MCF 10A (cell line): ENCODE measurements at regions of chr17 and their contacts with region 1.

Region 1: DNA sequence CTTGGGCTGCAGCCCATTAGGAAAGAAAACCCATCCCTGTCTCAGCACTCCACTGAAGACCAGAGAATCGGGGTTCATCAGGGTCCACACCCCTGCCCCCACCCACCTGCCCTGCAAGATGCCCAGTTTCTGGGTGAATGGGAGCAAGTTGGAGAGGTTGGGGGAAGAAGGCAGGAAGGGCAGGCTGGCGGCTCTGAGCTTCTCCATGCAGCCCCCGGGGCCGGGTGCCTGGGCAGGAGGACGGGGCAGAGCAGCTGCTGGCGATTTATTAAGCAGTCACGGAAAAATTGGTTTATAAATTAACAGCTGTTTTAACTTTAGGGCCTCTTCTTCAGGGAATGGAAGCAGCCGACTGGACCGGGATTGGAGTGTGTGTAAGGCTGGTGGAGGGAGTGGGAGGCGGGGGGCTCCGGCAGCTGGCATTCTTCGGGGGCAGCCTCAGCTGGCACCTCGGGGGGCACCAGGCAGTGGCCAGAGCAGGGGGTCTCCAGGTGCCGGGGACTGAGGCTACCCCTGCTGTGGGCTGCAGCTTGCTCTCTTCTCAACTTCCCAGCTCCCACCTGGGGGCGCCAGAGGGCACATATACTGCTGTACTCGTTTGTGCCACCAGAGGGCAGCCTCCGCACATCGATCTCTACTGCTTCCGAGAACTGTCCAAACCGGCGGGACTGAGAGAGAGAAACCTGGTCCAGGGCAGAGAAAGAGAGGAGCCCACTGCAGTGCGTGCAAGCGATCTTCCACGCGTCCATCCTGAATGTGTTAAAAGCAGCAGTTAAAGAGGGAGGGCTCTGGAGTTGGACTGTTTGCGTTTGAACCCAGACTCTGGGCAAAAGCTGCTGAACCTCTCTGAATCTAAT is 5.0 kb upstream of the PPP1R1B start:
- DNase-seq: peak; percentile 85
- H3K4me3 Mint-ChIP-seq: peak overlapping the region; percentile 9
- H3K27ac Mint-ChIP-seq: no peak overlapping the region
- H3K4me1 Mint-ChIP-seq: peaks cover 9% of the 10 kb centered on the region
- H3K27me3 Mint-ChIP-seq: peaks cover 14% of the 10 kb centered on the region
- CTCF ChIP-seq: peak; percentile 100

Region 2: GRCh38 chr17:39547713-39548478 is 73.9 kb before region 1 on chr17:
- CTCF ChIA-PET with region 1: interaction called, 125 read pairs
- POLR2A ChIA-PET with region 1: interaction called, 4 read pairs
- intact Hi-C with region 1: loop called (anchors 1 kb)
- DNase-seq: peak; percentile 60
- H3K4me3 Mint-ChIP-seq: no peak overlapping the region
- H3K27ac Mint-ChIP-seq: no peak overlapping the region
- H3K4me1 Mint-ChIP-seq: peaks cover 7% of the 10 kb centered on the region
- H3K27me3 Mint-ChIP-seq: no peaks in the 10 kb centered on the region
- CTCF ChIP-seq: peak; percentile 88

Region 3: DNA sequence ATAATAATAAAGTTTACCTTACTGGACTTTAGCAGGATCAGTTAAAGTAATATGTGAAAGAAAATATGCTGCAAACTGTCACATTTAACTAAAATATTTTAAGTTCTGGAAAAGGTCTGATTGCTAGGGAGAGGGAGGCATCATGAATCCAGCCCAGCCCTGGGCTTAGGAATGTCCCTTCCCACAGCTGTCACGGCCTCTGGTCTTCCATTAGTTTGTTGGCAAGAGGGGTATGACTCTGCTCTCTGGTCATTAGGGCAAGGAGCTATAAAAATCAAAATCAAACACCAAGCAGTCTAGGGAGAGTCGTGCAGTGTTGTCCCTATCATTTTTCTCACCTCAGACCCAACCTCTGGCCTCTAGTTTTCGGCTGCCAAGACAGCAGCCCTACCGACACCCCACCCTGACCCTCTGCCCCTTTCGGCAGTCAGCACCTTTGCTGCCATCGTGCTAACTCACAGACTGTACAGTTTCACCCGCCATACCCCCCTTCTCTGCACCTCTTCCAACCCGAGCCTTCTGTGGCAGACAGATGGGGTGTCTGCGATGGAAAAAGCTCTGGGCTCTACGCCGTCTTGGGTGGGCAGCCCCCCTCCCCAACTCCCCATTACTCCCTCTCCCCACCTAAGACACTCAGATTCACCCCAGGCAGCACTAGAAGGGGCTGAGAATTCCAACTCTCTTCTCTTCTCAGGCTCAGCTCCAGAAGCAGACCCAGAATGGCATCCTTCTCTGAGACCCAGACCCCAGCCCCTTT is 55.5 kb before region 1 on chr17:
- CTCF ChIA-PET with region 1: interaction called, 12 read pairs
- POLR2A ChIA-PET with region 1: interaction called, 3 read pairs
- intact Hi-C with region 1: no loop called
- DNase-seq: no peak
- H3K4me3 Mint-ChIP-seq: no peak overlapping the region
- H3K27ac Mint-ChIP-seq: no peak overlapping the region
- H3K4me1 Mint-ChIP-seq: no peaks in the 10 kb centered on the region
- H3K27me3 Mint-ChIP-seq: no peaks in the 10 kb centered on the region
- CTCF ChIP-seq: no peak

Region 4: DNA sequence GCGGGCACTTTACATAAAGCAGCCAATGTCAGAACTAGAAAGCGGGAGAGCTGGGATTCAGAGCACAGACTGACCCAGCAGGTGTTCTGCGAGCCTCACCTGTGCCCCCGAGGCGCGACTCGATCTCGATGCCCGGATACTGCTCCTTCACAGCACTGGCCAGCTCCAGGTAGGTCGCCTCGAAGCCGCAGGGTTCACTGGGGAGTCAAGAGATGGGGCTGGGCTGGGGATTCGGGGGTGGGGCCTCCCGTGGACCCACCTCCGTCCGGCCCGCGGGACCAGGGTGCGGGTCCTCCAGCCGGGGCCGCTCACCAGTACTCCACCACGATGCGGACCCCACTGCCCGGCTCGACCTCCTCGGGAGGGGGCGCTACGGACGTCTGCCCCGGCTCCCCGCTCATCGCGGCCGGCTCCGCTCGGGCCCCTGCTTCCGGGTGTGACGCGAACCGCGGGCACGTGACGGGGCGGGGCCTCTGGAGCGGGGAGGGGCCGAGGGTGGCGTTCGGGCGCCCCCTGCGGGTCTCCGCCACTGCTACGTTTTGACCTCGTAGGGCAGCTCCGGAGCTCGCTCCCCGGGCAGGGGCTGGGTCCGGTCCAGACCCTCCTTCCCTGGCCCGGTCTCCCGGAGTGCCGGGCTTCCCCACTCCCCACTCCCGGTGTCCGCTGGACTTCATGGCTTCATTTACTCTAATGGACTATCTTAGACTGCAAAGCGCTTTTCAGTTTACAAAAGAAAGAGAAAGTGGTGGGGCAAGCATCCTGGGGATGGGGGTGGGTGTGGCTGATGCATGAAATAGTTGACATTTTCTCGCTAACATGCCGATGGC is 108.6 kb after region 1 on chr17 and contains the start of gene MIEN1:
- CTCF ChIA-PET with region 1: interaction called, 10 read pairs
- POLR2A ChIA-PET with region 1: interaction called, 7 read pairs
- intact Hi-C with region 1: loop called (anchors 5 kb)
- DNase-seq: peak; percentile 82
- H3K4me3 Mint-ChIP-seq: peak within 1 kb of the TSS; percentile 78
- H3K27ac Mint-ChIP-seq: peak within 1 kb of the TSS; percentile 73
- H3K4me1 Mint-ChIP-seq: peaks cover 10% of the 10 kb centered on the region
- H3K27me3 Mint-ChIP-seq: no peaks in the 10 kb centered on the region
- CTCF ChIP-seq: peak; percentile 78
- total RNA-seq, gene MIEN1: 42.1 and 51.3 TPM in 2 replicates

Region 5: GRCh38 chr17:39754161-39754951 is 132.6 kb after region 1 on chr17:
- CTCF ChIA-PET with region 1: interaction called, 50 read pairs
- POLR2A ChIA-PET with region 1: interaction called, 10 read pairs
- intact Hi-C with region 1: loop called (anchors 1 kb)
- DNase-seq: peak; percentile 80
- H3K4me3 Mint-ChIP-seq: peak overlapping the region; percentile 70
- H3K27ac Mint-ChIP-seq: no peak overlapping the region
- H3K4me1 Mint-ChIP-seq: no peaks in the 10 kb centered on the region
- H3K27me3 Mint-ChIP-seq: peaks cover 45% of the 10 kb centered on the region
- CTCF ChIP-seq: peak; percentile 99